ENCODE measurements at regions of chr13 and their contacts with region 1.

Region 1: DNA sequence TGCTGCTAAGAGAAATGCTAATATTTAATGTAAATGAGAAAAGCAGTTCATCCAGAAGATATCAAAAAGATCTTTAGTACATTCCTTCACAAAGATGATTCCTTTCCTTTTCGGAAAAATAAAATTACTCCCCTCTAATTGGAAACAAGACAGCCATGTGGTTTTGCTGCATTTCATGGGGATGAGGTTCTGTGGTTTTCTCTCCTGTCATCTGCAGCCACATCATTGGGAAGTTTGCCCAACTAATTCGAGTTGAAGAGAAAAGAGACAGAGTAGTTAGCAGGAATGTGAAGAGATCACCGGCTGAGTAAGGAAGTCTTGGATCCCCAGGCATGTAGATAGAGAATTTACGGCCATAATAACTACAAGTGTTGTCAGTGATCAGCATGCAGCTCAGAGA is 122.1 kb downstream of the CYSLTR2 start:
- DNase-seq: no peak
- ATAC-seq: no peak
- H3K4me3 ChIP-seq: no peak overlapping the region
- H3K27ac ChIP-seq: no peak overlapping the region
- H3K4me1 ChIP-seq: no peaks in the 10 kb centered on the region
- H3K27me3 ChIP-seq: no peaks in the 10 kb centered on the region
- CTCF ChIP-seq: no peak

Region 2: DNA sequence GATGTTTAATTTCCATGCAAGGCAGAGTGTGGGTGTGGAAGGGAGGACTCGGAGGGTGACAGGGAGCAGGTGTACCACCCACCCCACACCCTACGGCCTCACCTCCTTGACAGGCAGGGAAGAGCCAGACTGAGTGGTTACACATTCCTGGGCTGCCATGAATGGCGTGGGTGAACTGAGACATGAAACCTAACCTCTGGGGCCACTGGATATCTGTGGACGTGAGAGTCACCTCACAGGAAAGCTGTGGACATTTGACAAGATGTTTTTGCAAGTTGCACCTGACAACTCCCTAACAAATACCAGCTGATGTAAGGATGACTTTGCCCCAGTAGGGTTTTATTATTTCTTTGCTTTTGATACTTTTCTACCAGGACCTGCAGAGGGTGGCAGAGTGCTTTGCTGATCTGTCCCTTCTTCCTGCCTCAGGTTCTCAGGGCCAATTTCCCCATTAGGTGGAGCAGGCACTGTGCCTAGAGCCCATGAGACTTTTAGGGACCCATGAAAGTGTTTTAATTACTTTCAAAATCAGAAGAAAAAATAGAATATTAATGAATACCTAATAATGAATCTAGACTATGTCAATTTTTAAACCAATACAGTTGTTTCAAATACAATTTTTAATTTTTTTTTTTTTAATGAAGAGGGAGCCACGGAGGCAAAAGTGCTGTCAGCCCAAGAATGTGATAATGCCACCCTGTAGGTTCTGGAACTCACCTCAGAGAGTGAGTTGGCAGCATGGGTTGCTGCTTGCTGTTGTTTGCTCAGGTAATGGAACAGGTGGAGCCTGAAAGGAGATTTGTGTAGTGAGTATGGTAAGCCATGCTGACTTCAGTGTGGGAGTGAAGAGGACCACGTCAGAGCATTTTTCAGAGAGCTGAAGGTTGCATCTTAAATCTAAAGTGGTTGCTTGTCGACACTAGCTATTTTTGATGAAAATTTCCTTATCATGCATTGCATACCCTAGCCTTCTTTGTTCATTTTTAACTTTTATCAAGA is 180.1 kb before region 1 on chr13:
- intact Hi-C with region 1: loop called (anchors 10 kb)
- DNase-seq: no peak
- ATAC-seq: peak; percentile 81 to 83
- H3K4me3 ChIP-seq: no peak overlapping the region
- H3K27ac ChIP-seq: no peak overlapping the region
- H3K4me1 ChIP-seq: no peaks in the 10 kb centered on the region
- H3K27me3 ChIP-seq: no peaks in the 10 kb centered on the region
- CTCF ChIP-seq: peak; percentile 59

Measured in lower lobe of right lung (tissue), 2 donors.